ENCODE measurements at regions of chr12 and their contacts with region 1.

Region 1: DNA sequence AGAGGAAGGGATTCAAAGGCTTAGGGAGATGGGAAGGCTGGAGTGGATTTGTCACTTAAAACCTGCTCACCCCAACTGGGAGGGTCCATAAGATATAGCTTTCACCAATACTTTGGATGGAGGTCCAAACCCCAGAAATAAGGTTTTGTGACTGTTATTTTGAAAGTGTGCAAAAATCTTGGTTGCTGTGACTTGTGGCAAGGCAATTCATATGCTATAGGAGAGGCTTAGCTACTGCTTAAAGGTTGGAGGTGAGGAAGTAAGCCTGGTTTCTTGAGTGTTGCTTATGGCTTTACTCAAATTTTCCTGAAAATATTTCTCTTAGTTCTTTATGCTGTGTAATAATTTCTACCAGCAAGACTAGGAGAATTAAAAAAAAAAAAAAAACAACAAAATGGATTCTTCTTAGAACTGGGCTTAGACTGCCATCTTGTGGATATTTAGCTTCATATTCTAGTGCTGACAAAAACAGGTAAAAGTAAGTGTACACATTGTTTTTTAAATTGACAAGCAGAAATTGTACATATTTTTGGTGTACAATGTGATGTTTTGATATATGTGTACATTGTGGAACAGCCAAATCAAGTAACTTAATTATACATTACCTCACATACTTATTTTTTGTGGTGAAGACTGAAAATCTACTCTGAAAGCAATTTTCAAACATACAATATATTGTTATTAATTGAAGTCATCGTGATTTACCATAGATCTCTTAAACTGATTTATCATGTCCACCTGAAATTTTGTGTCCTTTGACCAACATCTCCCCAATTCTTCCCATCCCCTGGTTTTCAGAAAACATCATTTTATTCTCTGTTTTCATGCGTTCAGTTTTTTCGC is 23.0 kb downstream of the PDE6H start:
- DNase-seq: peak in 1 of 2 experiments; percentile 40
- H3K4me3 ChIP-seq: no peak overlapping the region
- H3K4me1 ChIP-seq: no peaks in the 10 kb centered on the region
- H3K27me3 ChIP-seq: peaks cover under 1% of the 10 kb centered on the region

Region 2: GRCh38 chr12:13587721-13588390 is 1407.9 kb before region 1 on chr12:
- in situ Hi-C with region 1: no loop called
- DNase-seq: no peak
- H3K4me3 ChIP-seq: no peak overlapping the region
- H3K4me1 ChIP-seq: no peaks in the 10 kb centered on the region
- H3K27me3 ChIP-seq: no peaks in the 10 kb centered on the region; the same call in 1 of the 2 replicates

Region 3: DNA sequence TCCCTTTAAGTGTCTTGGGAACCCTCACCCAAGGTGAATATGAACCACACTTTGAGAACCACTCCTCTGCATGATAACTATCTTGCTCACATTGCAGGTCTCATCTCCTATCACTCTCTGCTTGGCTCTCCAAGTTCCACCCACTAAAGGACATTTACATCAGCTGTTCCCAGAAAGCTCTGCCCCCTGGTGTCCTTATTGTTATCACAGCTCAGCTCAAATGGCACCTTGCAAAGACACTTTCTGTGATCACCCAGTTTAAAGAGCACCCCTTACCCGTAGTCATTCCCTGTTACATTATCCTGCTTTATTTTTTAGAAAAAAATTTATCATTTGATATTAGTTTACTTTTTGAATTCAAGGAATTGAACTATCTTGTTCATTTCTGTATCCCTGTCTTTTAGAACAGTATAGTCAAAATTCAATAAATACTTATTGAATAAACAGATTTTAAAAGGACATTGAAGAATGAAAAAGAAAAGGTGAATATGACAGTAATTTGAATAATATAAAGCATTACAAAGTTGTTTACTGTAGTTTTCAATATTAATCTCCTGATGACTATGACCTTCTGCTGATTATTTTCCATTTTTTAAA is 278.9 kb before region 1 on chr12:
- in situ Hi-C with region 1: loop called (anchors 25 kb)
- DNase-seq: peak; percentile 15 to 50
- H3K4me3 ChIP-seq: no peak overlapping the region
- H3K4me1 ChIP-seq: no peaks in the 10 kb centered on the region
- H3K27me3 ChIP-seq: no peaks in the 10 kb centered on the region; the same call in 1 of the 2 replicates